ENCODE measurements at regions of chr12 and their contacts with region 1.

Region 1: DNA sequence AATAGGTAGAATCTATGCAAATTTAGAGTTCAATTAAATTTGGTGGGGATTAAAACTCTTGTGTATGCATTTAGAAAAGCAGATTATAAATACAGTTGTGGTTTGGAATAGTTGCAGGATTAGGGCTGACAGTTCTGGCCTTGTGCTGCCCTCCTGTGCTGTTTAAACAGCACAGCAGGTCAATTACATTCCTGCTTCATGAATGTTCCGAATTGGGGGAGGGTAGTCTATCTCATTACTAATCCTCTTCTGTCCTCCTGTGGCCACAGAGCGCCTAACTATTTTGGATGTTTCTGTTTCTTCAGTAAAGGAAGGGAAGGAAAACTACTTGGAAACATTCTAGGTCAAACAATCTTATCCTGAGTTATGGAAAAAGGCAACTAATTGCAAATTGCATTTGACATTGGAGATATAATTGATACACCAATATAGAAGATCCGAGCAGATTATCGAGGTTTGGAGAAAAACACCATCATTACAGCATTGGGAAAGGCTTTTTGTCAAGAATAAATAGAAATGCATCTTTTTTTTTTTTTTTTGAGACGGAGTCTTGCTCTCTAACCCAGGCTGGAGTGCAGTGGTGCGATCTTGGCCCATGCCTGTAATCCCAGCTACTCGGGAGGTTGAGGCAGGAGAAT is 8.7 kb upstream of the GPR19 start:
- DNase-seq: peak in 1 of 2 donors; percentile 63
- ATAC-seq: peak; percentile 94 to 99 (median 98)
- H3K4me3 ChIP-seq: no peak overlapping the region
- H3K27ac ChIP-seq: peak overlapping the region in 1 of 10 donors; percentile 15
- H3K4me1 ChIP-seq: peaks cover 0 to 11% (median 3%) of the 10 kb centered on the region in 9 donors
- H3K27me3 ChIP-seq: no peaks in the 10 kb centered on the region
- CTCF ChIP-seq: peak; percentile 58 to 95 (median 82)

Region 2: GRCh38 chr12:12505544-12506495 is 198.9 kb before region 1 on chr12:
- intact Hi-C with region 1: loop called in 1 of 10 experiments (anchors 5 kb)
- DNase-seq: peak in 1 of 2 donors; percentile 20
- ATAC-seq: peak; percentile 75 to 88 (median 84)
- H3K4me3 ChIP-seq: peak overlapping the region in 7 of 10 donors; percentile 23 to 42 (median 28)
- H3K27ac ChIP-seq: peak overlapping the region; percentile 44 to 87 (median 68)
- H3K4me1 ChIP-seq: peaks cover 0 to 68% (median 56%) of the 10 kb centered on the region in 9 donors
- H3K27me3 ChIP-seq: no peaks in the 10 kb centered on the region
- CTCF ChIP-seq: no peak

Region 3: GRCh38 chr12:12764824-12765223 is 60.1 kb after region 1 on chr12:
- intact Hi-C with region 1: no loop called
- DNase-seq: no peak
- ATAC-seq: no peak
- H3K4me3 ChIP-seq: no peak overlapping the region
- H3K27ac ChIP-seq: no peak overlapping the region
- H3K4me1 ChIP-seq: no peaks in the 10 kb centered on the region
- H3K27me3 ChIP-seq: no peaks in the 10 kb centered on the region
- CTCF ChIP-seq: no peak

Region 4: DNA sequence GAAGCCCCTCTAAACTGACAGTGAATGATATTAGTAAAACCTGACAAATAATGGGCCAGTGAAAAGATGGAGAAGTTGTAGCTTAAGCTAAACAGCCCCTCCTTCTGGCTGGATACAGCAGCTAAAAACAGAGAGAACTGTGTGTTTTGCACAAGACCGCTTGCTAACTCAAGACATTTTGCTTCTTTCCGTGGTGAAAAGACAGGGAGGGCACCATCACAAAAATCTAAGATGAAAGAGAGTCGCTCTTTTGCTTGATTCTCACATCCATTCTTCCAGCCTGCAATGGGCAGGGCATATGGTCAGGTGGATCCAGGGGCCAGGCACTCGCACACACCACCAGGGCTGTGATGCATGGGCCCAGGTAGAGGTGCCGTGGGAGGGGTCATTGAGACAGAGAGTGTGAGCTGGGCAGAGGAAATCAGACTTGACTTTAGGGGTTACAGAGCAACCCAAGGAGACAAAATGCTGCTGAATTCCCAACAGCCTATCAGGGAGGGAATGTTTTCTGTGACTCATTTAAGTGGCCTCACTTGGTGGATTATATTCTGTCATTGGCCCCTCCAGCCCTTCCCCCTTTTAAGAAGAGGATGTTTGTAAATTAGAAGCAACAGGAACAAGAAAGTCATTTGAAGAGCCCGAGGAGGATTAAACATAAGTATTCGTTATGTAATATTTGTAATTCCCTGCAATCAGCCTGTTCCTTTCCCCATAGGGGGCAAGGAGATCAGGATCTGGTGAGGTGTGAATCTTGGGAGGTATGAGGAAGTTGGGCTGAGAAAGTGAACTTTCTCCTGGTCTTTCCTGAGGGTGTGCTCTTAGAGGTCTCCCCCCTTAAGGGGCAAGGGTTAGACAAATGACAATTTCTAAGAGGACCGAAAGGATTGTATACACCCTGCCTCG is 504.1 kb after region 1 on chr12:
- intact Hi-C with region 1: no loop called
- DNase-seq: no peak
- ATAC-seq: peak in 1 of 8 donors; percentile 21
- H3K4me3 ChIP-seq: no peak overlapping the region
- H3K27ac ChIP-seq: peak overlapping the region in 8 of 10 donors; percentile 8 to 77 (median 34)
- H3K4me1 ChIP-seq: peaks cover 18 to 83% (median 77%) of the 10 kb centered on the region in 9 donors
- H3K27me3 ChIP-seq: no peaks in the 10 kb centered on the region
- CTCF ChIP-seq: peak in 7 of 9 donors; percentile 25 to 58 (median 42)

Measured in heart right ventricle (tissue), 16 donors.